ENCODE measurements at regions of chrX and their contacts with region 1.

Region 1: GRCh38 chrX:103464774-103465117 is 54.5 kb downstream of the RAB40A start:
- DNase-seq: peak; percentile 81
- H3K4me3 ChIP-seq: peak overlapping the region; percentile 34
- H3K27ac ChIP-seq: no peak overlapping the region
- H3K4me1 ChIP-seq: no peaks in the 10 kb centered on the region
- H3K27me3 ChIP-seq: peaks cover 7% of the 10 kb centered on the region
- CTCF ChIP-seq: peak; percentile 76

Region 2: DNA sequence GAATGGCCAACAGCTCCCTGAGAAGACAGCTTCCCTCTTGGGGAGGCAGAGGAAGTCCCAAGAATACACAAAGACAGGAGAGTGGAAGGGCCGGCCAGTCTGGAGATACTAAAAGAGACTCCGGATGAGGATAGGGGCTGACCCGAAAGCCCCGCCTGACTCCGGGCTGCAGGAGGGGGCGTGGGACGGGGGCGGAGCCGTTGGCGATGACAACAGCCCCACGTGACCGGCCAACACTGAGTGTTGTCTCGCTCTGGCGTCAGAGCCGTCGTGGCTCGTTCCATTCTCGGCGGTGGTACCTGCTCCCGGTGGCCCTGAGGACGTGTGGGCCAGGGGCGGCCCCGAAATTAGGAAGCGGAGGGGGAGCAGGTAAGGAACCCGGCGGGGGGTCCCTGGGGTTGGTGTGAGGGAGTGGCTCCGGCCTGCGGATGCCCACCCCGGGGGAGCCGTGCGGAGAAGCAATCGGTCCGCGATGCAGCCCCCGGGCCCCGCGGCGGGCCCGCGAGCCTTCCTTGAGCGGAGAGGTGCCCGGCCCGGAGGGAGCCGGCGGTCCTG is 249.8 kb before region 1 on chrX and contains the start of gene BEX4:
- CTCF ChIA-PET with region 1: interaction called, 12 read pairs
- POLR2A ChIA-PET with region 1: no interaction called
- intact Hi-C with region 1: loop called (anchors 5 kb)
- DNase-seq: peak; percentile 85
- H3K4me3 ChIP-seq: peak within 1 kb of the TSS; percentile 71
- H3K27ac ChIP-seq: peak within 1 kb of the TSS; percentile 88
- H3K4me1 ChIP-seq: no peaks in the 10 kb centered on the region
- H3K27me3 ChIP-seq: no peaks in the 10 kb centered on the region
- CTCF ChIP-seq: no peak
- total RNA-seq, gene BEX4: 65.4 and 67.7 TPM in 2 replicates

Region 3: GRCh38 chrX:103343105-103343504 is 121.6 kb before region 1 on chrX:
- CTCF ChIA-PET with region 1: interaction called, 9 read pairs
- POLR2A ChIA-PET with region 1: no interaction called
- intact Hi-C with region 1: loop called (anchors 1 kb)
- DNase-seq: peak; percentile 48
- H3K4me3 ChIP-seq: no peak overlapping the region
- H3K27ac ChIP-seq: no peak overlapping the region
- H3K4me1 ChIP-seq: no peaks in the 10 kb centered on the region
- H3K27me3 ChIP-seq: no peaks in the 10 kb centered on the region
- CTCF ChIP-seq: peak; percentile 81

Region 4: GRCh38 chrX:104482757-104483156 is 1018.0 kb after region 1 on chrX:
- CTCF ChIA-PET with region 1: no interaction called
- POLR2A ChIA-PET with region 1: no interaction called
- intact Hi-C with region 1: no loop called
- DNase-seq: peak; percentile 3
- H3K4me3 ChIP-seq: no peak overlapping the region
- H3K27ac ChIP-seq: no peak overlapping the region
- H3K4me1 ChIP-seq: no peaks in the 10 kb centered on the region
- H3K27me3 ChIP-seq: peaks cover 7% of the 10 kb centered on the region
- CTCF ChIP-seq: peak; percentile 48; the same call in 1 of the 2 replicates